ENCODE measurements at regions of chr1 and their contacts with region 1.

Region 1: DNA sequence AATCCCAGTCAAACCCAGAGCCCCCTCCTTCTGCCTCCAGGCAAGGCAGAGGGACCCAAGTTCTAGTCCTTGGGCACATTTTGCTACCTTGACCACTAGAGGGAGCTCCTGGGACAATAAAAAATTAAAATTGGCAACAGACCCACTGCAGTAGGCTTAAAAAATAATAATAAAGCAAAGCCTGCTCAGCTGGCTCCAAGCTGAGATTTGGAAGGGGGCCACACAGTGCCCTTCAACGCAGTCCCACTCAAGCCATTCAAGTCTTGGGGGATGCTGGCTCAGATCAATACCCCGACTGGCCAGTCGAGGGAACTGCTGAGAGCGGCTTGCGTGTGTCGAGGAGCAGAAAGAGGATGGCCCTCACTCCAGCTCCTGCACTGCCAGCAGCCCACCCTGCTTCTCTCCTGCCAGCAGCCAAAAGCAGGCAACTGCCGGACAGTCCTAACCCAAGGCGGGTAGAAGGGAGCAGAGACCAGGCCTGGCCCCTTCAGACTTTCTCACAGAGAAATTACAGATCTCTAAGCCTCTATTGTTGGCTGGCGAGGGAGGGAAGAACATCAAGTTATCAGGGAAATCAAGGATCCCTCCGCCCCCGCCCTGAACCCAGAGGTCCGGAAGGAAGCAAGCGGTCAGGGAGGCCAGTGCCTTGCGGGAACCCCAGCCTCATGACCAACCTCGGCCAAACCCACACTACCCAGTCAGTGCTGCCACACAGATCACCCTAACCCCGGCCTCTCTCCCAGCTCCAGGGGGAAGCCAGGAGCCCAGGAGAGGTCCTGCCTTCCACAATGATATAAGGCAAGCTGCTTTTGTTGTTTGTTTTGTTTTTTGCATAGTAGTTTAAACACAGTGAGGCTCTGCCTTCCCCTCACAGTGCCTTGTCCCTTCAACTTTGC is 4.9 kb upstream of the ALDH4A1 start:
- DNase-seq: peak; percentile 71
- ATAC-seq: peak; percentile 17

Region 2: GRCh38 chr1:18956369-18957135 is 49.3 kb after region 1 on chr1 and contains the start of gene IFFO2:
- intact Hi-C with region 1: loop called (anchors 5 kb)
- DNase-seq: peak; percentile 99
- ATAC-seq: peak; percentile 99
- total RNA-seq, gene IFFO2: 5.2 TPM

Region 3: GRCh38 chr1:19074902-19075721 is 167.8 kb after region 1 on chr1:
- intact Hi-C with region 1: loop called (anchors 5 kb)
- DNase-seq: no peak
- ATAC-seq: peak; percentile 39

Region 4: DNA sequence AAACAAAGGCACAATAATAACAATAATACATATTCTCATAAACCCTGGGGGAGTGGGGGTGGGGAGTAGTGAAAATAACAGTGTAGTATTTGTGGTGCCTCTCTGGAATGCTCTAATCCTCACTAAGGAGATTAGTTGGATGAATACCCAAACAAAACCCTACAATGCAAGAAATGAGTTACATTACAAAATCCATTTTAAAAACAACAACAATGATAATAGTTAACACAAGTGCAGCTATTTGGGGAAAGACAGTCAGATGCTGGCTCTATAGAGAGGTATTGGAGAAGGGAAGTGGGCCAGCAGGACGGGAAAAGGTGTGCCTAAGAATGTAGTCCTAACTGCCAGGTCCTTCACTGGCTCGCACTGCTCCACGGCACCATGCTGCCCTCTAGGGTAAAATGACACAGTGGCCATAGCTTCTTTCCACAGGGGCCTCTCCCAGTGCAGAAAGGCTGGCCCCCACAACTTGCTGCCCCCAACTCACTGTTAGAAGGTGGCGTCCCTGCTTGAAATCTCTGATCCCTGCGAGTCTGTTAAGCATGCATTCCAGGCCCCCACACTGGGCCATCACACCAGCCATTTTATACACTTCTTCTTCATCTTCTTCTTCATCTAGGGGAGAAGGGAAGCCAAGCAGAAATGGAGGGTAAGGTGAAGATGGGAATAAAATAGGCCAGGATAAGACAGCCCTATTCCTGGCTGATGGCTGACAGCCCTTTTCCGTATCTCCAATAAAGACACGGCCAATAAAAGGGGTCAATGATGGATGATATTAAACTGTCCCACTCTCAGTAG is 189.0 kb after region 1 on chr1:
- intact Hi-C with region 1: loop called (anchors 5 kb)
- DNase-seq: no peak
- ATAC-seq: peak; percentile 68

Measured in Right ventricle myocardium inferior (tissue), 1 donor.